Mammary epithelial cell (primary cell): ENCODE measurements at regions of chr10 and their contacts with region 1.

Region 1: GRCh38 chr10:4151466-4151865 is 366.5 kb upstream of the KLF6 start:
- DNase-seq: no peak
- H3K4me3 ChIP-seq: no peak overlapping the region
- H3K27ac ChIP-seq: no peak overlapping the region
- H3K4me1 ChIP-seq: no peaks in the 10 kb centered on the region
- H3K27me3 ChIP-seq: no peaks in the 10 kb centered on the region
- CTCF ChIP-seq: no peak

Region 2: DNA sequence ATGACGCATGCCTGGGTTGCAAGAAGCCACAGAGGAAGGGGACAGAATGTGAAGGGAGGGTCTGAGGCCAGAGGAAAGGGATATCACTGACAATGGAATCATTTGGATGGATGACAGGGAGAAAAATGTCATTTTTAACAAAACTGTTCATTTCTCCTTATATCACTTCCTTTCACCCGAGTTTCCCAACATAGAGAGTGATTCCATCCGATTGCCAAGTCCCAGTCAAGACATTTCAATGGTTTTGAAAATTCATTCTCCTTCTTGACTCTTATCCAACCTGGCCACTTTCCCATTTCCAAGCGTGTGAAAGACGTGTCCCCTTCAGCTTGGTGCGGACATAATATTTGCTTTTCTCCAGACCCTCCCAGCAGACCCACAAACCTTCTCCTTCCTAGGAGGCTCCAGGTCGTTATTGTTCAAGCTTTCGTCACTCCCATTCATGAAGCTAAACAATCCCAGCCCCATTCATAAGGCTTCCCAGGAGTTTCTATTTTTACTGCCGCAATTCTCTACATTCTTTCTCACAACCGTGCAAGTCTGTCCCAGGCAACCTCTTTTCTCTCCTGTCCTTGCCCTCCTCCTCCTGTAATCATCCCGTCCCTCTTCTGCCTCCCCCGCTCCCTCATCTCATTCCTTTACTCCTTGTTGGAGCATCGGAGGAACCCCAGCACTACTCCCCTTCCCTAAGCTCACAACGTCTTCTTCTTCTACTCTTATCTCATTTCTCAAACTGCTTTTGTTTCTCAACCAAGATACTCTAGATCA is 65.2 kb before region 1 on chr10:
- CTCF ChIA-PET with region 1: no interaction called
- dilution Hi-C with region 1: loop called (anchors 5 kb)
- in situ Hi-C with region 1: no loop called
- intact Hi-C with region 1: no loop called
- DNase-seq: no peak
- H3K4me3 ChIP-seq: no peak overlapping the region
- H3K27ac ChIP-seq: no peak overlapping the region
- H3K4me1 ChIP-seq: no peaks in the 10 kb centered on the region
- H3K27me3 ChIP-seq: no peaks in the 10 kb centered on the region
- CTCF ChIP-seq: no peak

Region 3: DNA sequence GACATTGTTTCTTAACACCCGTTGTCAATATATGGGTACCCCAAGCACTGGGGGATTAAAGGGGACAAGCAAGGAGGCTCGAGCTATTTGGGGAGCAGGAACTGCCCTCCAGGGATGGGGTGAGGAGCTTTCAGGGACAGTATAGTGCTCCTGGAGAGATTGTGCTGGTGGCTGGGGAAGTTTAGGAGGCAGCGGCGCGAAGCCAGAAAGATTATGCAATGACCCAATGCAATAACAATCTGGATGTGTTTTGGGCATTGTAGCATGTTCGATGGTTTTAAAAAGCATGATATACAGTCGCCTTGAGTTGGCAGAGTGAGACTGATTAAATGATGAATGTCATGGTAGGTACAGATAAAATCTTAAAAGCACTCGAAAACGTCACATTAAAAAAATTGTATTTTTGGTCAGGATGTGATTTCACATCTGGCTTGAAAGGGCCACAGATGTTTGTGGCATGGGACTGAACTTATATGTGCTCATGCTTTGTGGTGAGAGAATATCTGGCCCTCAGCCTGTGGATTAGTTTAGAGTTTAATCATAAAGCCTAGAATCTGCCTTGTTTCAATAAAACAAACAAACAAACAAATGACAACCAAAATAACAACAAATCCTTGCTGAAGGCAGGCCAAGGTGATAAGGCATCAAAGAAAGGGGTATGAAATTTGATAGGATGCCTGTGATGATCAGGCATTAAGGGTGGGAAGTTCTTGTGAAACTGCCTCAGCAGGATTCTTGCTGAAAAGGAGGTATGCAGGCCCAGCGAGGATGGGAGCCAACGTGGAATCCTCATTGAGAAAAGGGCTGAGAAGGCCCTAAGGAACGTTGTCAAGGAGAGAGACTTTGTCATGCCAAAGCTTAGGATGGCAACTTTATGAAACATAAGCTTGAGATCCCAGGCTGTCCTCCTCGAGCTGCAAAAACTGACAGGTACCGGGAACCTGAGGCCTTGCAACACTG is 50.7 kb after region 1 on chr10:
- CTCF ChIA-PET with region 1: no interaction called
- dilution Hi-C with region 1: loop called (anchors 5 kb)
- in situ Hi-C with region 1: no loop called
- intact Hi-C with region 1: no loop called
- DNase-seq: no peak
- H3K4me3 ChIP-seq: no peak overlapping the region
- H3K27ac ChIP-seq: no peak overlapping the region
- H3K4me1 ChIP-seq: peaks cover 6% of the 10 kb centered on the region
- H3K27me3 ChIP-seq: no peaks in the 10 kb centered on the region
- CTCF ChIP-seq: no peak